Posterior cingulate gyrus (tissue), 11 donors: ENCODE measurements at regions of chr10 and their contacts with region 1.

Region 1: GRCh38 chr10:91006001-91006751 is 85.3 kb upstream of the ANKRD1 start:
- DNase-seq: peak in 6 of 10 donors; percentile 34 to 92 (median 56)

Region 2: GRCh38 chr10:90912174-90912573 is 94.0 kb before region 1 on chr10:
- intact Hi-C with region 1: loop called (anchors 1 kb)
- DNase-seq: no peak

Region 3: DNA sequence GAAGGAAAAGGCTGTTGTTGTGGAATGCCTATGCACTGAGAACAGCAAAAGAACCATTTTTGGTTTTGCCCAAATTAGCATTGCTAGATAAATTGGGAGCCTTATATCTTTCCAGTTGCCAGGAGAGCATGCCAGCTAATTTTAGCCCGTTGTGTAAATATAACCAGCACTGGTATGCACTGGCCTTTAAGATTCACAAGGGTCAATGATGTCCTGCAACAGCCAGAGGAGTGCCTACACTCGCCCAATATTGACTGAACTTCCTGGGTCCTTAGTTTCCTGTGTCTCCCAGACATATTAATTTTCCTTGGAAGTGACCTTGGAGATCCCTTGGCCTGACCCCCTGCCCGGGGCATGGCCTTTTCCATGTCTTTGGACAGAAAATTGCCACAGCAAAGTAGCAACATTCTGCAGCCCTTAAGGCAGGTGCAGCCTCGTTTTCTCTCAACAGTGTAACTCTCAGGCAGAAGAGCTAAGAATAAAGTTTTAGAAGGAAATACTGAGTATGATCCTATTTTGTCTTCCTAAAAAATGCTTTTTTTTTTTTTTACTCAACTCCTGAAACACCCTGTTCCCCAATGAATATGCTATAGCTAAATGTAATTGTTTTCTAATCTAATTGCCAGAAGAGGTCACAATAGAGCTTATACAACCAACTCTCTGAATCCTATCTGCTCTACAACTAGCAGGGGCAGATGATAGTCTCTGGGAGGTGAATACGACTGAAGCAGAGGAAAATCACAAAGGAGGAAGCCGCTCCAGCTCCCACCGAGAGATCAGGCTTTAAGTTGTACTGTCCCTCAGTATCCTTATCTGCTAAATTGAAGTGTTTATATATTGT is 82.3 kb after region 1 on chr10:
- intact Hi-C with region 1: loop called (anchors 5 kb)
- DNase-seq: no peak

Region 4: DNA sequence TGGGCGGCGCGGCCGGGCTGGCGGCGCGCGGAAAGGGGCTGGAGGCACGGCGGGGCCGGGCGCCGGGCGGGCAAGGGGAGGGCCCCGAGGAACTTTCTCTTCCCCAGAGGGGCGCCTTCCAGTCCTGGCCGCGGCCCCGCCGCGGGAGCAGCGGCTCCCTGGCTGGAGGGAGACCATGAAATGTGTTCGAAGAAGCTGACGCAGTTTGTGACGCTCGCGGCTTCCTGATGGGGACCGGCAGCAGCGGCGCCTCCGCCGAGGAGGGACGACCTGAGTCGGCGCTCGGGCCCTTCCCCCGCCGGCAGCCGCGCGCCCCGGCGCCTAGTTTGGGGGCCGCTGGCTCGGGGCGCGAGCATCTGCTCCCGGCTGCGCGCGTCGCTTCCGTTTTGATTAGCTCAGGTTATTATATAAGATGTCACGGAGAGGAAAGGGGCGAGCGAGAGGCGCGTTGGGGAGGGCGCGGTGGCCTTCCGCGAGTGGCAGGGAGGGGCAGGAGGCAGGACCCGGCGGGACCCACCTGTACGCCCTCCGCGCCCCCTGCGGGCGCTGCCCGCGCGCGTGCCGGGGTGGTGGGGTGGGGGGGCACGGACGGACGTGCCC is 157.2 kb after region 1 on chr10:
- intact Hi-C with region 1: loop called (anchors 2 kb)
- DNase-seq: peak; percentile 37 to 94 (median 60)

Region 5: GRCh38 chr10:91251430-91252056 is 245.4 kb after region 1 on chr10:
- intact Hi-C with region 1: loop called (anchors 2 kb)
- DNase-seq: peak in 7 of 10 donors; percentile 16 to 77 (median 60)